Calu3 (cell line): ENCODE measurements at regions of chr5 and their contacts with region 1.

Region 1: GRCh38 chr5:173331956-173332479 is 3.8 kb upstream of the STC2 start:
- DNase-seq: peak; percentile 86
- H3K4me3 Mint-ChIP-seq: no peak overlapping the region
- H3K27ac Mint-ChIP-seq: peak overlapping the region; percentile 6
- H3K4me1 Mint-ChIP-seq: peaks cover 14% of the 10 kb centered on the region
- H3K27me3 Mint-ChIP-seq: no peaks in the 10 kb centered on the region
- CTCF ChIP-seq: peak; percentile 86

Region 2: GRCh38 chr5:172984243-172984953 is 347.6 kb before region 1 on chr5:
- CTCF ChIA-PET with region 1: interaction called, 3 read pairs
- intact Hi-C with region 1: loop called (anchors 2 kb)
- DNase-seq: peak; percentile 78
- H3K4me3 Mint-ChIP-seq: peak overlapping the region; percentile 91
- H3K27ac Mint-ChIP-seq: peak overlapping the region; percentile 83
- H3K4me1 Mint-ChIP-seq: peaks cover 14% of the 10 kb centered on the region
- H3K27me3 Mint-ChIP-seq: no peaks in the 10 kb centered on the region
- CTCF ChIP-seq: peak; percentile 23

Region 3: GRCh38 chr5:173293817-173294672 is 38.0 kb before region 1 on chr5:
- CTCF ChIA-PET with region 1: interaction called, 24 read pairs
- intact Hi-C with region 1: loop called (anchors 1 kb)
- DNase-seq: peak; percentile 87
- H3K4me3 Mint-ChIP-seq: peak overlapping the region; percentile 20
- H3K27ac Mint-ChIP-seq: peak overlapping the region; percentile 40
- H3K4me1 Mint-ChIP-seq: peaks cover 11% of the 10 kb centered on the region
- H3K27me3 Mint-ChIP-seq: peaks cover 52% of the 10 kb centered on the region
- CTCF ChIP-seq: peak; percentile 93

Region 4: GRCh38 chr5:173451031-173451430 is 119.0 kb after region 1 on chr5:
- CTCF ChIA-PET with region 1: no interaction called
- intact Hi-C with region 1: loop called (anchors 2 kb)
- DNase-seq: no peak
- H3K4me3 Mint-ChIP-seq: no peak overlapping the region
- H3K27ac Mint-ChIP-seq: peak overlapping the region; percentile 86
- H3K4me1 Mint-ChIP-seq: peaks cover 48% of the 10 kb centered on the region
- H3K27me3 Mint-ChIP-seq: no peaks in the 10 kb centered on the region
- CTCF ChIP-seq: peak; percentile 53

Region 5: GRCh38 chr5:173513521-173513991 is 181.5 kb after region 1 on chr5:
- CTCF ChIA-PET with region 1: no interaction called
- intact Hi-C with region 1: loop called (anchors 5 kb)
- DNase-seq: no peak
- H3K4me3 Mint-ChIP-seq: no peak overlapping the region
- H3K27ac Mint-ChIP-seq: peak overlapping the region; percentile 38
- H3K4me1 Mint-ChIP-seq: peaks cover 22% of the 10 kb centered on the region
- H3K27me3 Mint-ChIP-seq: no peaks in the 10 kb centered on the region
- CTCF ChIP-seq: no peak

Region 6: DNA sequence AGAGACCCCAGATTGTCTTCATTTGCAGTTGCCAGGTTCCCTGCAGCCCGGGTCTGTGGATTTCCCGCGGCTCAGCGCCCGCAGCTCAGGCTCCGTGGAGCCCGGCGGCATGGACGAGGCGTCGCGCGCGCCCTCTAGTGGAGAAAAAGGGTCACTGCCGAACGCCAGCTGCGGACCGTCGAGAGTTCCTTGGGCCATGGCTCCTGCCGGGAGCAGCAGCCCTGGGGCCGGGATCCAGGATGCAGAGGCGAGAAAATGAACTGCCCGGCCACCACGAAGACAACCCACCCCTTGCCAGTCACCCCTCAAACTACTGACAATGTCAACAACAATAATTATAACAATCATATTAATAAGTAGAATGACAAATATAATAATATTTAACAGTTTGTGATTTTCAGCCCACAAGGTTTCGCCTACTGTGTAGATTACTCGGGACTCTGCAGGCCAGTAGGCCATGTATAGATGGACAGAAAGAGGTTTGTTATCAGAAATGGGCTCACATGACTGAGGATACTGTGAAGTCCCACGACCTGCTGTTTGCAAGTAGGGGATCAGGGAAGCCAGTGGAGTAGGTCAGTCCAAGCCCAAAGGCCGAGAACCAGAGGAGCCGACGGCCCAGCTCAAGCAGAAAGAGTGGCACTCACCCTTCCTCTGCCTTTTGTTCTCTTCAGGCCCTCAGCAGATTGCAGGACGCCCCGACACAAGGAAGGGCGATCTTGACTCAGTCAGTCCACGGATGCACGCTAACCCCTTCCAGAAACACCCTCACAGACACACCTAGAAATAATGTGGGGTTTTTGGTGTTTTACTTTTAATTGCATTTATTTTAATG is 241.3 kb after region 1 on chr5:
- CTCF ChIA-PET with region 1: interaction called, 4 read pairs
- intact Hi-C with region 1: loop called (anchors 10 kb)
- DNase-seq: peak; percentile 88
- H3K4me3 Mint-ChIP-seq: peak overlapping the region; percentile 37
- H3K27ac Mint-ChIP-seq: no peak overlapping the region
- H3K4me1 Mint-ChIP-seq: peaks cover 11% of the 10 kb centered on the region
- H3K27me3 Mint-ChIP-seq: peaks cover 32% of the 10 kb centered on the region
- CTCF ChIP-seq: peak; percentile 96